Mammary epithelial cell (primary cell): ENCODE measurements at regions of chr19 and their contacts with region 1.

Region 1: GRCh38 chr19:49264258-49264657 is 60.7 kb downstream of the SLC6A16 start:
- DNase-seq: no peak
- H3K4me3 ChIP-seq: no peak overlapping the region
- H3K27ac ChIP-seq: no peak overlapping the region
- H3K4me1 ChIP-seq: no peaks in the 10 kb centered on the region
- H3K27me3 ChIP-seq: no peaks in the 10 kb centered on the region
- CTCF ChIP-seq: no peak

Region 2: DNA sequence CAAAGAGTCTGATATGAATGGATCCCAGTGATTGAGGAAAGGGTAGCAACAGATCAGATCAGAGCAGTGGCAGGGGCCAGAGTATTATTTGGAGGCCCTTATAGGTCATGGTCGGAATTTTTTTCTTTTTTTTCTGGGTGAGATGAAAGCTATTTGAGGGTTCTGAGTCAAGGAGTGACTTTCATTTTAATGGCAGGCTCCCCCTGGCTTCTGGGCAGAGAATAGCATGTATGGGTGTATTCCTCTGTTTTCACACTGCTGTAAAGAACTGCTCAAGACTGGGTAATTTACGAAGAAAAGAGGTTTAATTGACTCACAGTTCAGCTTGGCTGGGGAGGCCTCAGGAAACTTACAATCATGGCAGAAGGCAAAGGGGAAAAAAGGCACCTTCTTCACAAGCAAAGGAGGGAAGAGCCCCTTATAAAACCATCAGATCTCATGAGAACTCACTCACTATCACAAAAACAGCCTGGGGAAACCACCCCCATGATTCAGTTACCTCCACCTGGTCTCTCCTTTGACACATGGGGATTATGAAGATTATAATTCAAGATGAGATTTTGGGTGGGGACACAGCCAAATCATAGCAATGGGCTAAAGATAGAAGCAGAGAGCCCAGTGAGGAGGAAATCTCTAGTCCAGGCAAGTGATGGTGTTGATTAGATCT is 63.8 kb after region 1 on chr19:
- CTCF ChIA-PET with region 1: no interaction called
- dilution Hi-C with region 1: loop called (anchors 10 kb)
- in situ Hi-C with region 1: no loop called
- intact Hi-C with region 1: loop called (anchors 1 kb)
- DNase-seq: no peak
- H3K4me3 ChIP-seq: no peak overlapping the region
- H3K27ac ChIP-seq: no peak overlapping the region
- H3K4me1 ChIP-seq: no peaks in the 10 kb centered on the region
- H3K27me3 ChIP-seq: no peaks in the 10 kb centered on the region
- CTCF ChIP-seq: peak; percentile 76 to 86